PC-9 (cell line): ENCODE measurements at regions of chr10 and their contacts with region 1.

Region 1: DNA sequence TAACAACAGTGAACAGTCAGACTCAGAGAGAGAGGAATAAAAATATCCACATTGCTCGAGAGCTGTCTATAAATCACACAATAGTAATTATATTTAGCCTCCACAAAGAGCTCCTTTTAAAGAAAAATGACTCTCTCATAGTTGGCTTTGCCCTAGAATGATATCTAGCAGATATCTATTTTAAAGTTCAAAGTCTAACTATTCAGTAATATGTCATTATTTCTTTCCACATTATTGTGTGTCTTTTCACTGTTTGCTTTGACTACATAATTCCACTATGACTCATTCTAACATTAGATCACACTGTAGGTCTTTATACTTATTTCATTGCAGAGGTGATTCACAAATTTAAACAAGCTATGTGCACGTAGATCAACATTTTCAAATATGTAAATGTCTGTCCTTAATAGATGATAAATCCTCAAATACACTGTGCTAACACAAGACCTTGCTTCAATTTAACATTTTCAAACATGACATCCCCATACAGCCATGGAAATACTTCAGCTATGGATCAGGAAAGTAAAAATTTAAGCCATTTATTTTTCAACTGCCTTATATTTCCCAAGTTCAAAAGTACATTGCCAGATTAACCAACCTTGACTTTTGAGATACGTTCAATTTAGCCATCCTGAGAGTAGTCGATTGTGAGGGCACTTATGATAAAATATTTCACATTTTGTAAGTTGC is 99.9 kb upstream of the AKR1E2 start:
- DNase-seq: peak in 1 of 2 experiments; percentile 86
- H3K4me3 ChIP-seq: no peak overlapping the region
- H3K27ac ChIP-seq: peak overlapping the region; percentile 89
- H3K4me1 ChIP-seq: peaks cover 16% of the 10 kb centered on the region
- H3K27me3 ChIP-seq: no peaks in the 10 kb centered on the region
- CTCF ChIP-seq: no peak

Region 2: GRCh38 chr10:3122034-3122433 is 1604.0 kb before region 1 on chr10:
- CTCF ChIA-PET with region 1: interaction called, 13 read pairs
- POLR2A ChIA-PET with region 1: no interaction called
- intact Hi-C with region 1: no loop called
- DNase-seq: no peak
- H3K4me3 ChIP-seq: no peak overlapping the region
- H3K27ac ChIP-seq: no peak overlapping the region
- H3K4me1 ChIP-seq: no peaks in the 10 kb centered on the region
- H3K27me3 ChIP-seq: no peaks in the 10 kb centered on the region
- CTCF ChIP-seq: no peak